ENCODE measurements at regions of chr5 and their contacts with region 1.

Region 1: GRCh38 chr5:140145818-140146522 is 20.2 kb downstream of the IGIP start:
- DNase-seq: peak; percentile 44
- H3K4me3 ChIP-seq: no peak overlapping the region
- H3K27ac ChIP-seq: no peak overlapping the region
- H3K4me1 ChIP-seq: no peaks in the 10 kb centered on the region
- H3K27me3 ChIP-seq: no peaks in the 10 kb centered on the region
- CTCF ChIP-seq: no peak

Region 2: DNA sequence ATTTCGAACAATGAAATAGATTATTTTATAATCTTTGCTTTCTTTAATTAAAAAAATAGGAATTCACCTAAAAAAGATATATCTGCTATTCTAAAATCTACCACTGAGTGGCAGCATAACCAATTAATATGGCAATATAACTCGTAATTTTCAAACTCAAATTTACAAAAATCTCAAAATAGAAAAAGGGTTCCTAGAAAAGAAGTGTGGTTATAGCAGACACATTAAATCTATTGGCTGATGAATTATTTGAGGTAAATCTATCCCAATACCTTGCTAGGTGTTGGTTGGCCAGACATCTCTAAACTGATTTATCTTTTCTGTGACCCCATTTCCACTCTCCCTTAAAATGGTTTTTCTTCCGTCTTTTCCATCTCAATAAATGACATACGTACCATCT is 72.7 kb before region 1 on chr5:
- CTCF ChIA-PET with region 1: interaction called, 4 read pairs
- dilution Hi-C with region 1: no loop called
- in situ Hi-C with region 1: no loop called
- intact Hi-C with region 1: loop called (anchors 1 kb)
- DNase-seq: no peak
- H3K4me3 ChIP-seq: no peak overlapping the region
- H3K27ac ChIP-seq: no peak overlapping the region
- H3K4me1 ChIP-seq: no peaks in the 10 kb centered on the region
- H3K27me3 ChIP-seq: peaks cover 2% of the 10 kb centered on the region
- CTCF ChIP-seq: peak; percentile 50 to 53

Region 3: GRCh38 chr5:140094889-140095288 is 51.1 kb before region 1 on chr5:
- CTCF ChIA-PET with region 1: no interaction called
- dilution Hi-C with region 1: loop called (anchors 5 kb)
- in situ Hi-C with region 1: no loop called
- intact Hi-C with region 1: no loop called
- DNase-seq: no peak
- H3K4me3 ChIP-seq: no peak overlapping the region
- H3K27ac ChIP-seq: no peak overlapping the region
- H3K4me1 ChIP-seq: no peaks in the 10 kb centered on the region
- H3K27me3 ChIP-seq: no peaks in the 10 kb centered on the region
- CTCF ChIP-seq: no peak

Region 4: DNA sequence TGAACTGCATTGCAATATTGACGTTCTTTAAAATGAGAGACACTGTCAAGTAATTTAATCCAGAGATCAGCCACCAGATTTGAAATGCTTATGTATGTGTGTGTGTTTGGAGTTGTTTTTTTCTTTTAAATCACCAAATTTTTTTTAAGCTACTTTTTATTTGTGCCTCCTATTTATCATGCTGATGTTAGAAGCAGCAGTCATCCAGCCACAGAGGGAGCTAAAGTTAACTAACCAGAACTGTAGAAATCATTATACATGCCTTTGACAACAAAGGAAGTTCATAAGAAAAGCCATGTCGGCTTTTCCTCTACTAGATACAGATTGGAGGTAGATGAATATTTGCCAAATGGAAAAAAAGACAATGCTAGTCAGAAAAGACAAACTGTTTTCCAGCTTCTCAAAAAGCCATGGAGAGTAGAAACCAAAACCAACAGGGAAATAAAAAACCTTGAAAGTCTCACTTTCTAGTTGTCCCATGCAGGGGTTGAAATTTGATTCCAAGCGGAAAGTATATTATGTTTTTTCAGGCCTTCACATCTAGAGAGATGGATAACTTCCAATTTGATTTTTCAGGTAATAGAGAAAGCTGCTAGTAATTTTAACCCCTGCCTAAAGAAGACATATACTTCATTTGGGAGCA is 27.6 kb before region 1 on chr5:
- CTCF ChIA-PET with region 1: interaction called, 10 read pairs
- dilution Hi-C with region 1: no loop called
- in situ Hi-C with region 1: no loop called
- intact Hi-C with region 1: no loop called
- DNase-seq: no peak
- H3K4me3 ChIP-seq: no peak overlapping the region
- H3K27ac ChIP-seq: no peak overlapping the region
- H3K4me1 ChIP-seq: peaks cover 14% of the 10 kb centered on the region
- H3K27me3 ChIP-seq: no peaks in the 10 kb centered on the region
- CTCF ChIP-seq: no peak